Activated CD4-positive, alpha-beta memory T cell treated with anti-CD3 and anti-CD28 coated beads, Interleukin-2, amount 10 ng/mL, durations not matched to agents 7 days and 5 days (primary cell): ENCODE measurements at regions of chr6 and their contacts with region 1.

Region 1: DNA sequence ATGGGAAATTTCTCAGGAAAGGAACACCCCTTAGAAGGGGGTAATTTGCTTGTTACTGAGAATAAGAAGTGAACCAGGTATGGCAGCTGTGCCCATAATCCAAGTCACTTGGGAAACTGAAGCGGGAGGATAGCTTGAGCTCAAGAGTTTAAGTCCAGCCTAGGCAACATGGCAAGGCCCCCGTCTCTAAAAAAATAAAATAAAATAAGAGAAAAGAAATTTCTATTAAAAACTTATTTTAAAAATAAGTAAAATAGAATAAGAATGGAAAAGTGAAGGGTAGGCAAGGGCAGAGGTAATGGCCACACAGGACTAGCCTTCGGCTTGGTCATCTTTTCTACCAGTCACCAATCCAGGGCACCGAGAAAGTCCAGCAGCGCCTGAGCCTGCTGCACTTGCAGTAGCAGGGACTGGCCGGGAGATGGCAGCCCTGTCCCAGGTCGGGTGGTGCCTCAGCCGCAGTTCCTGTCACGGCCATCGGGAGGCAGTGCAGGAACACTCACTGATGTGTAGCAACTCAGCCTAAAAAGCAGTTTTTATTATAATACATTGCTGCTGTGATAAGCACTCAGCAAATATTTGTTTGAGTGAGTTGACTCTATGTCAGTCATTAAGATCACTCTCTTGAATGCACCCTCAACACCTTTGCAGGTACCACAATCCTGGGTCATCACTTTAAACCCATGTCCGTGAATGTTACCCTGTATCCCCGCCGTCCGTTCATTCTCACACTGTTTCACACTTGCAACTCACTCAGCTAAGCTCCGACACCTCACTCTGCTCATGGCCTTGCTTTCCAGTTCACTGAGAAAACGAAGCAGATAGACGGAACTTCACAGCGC is 23.2 kb upstream of the GCM1 start:
- DNase-seq: peak; percentile 91
- H3K4me3 Mint-ChIP-seq: no peak overlapping the region
- H3K27ac Mint-ChIP-seq: no peak overlapping the region
- H3K4me1 Mint-ChIP-seq: no peaks in the 10 kb centered on the region
- H3K27me3 Mint-ChIP-seq: no peaks in the 10 kb centered on the region

Region 2: GRCh38 chr6:53410508-53411258 is 238.9 kb after region 1 on chr6:
- CTCF ChIA-PET with region 1: interaction called, 56 read pairs
- POLR2A ChIA-PET with region 1: no interaction called
- DNase-seq: peak; percentile 65
- H3K4me3 Mint-ChIP-seq: no peak overlapping the region
- H3K27ac Mint-ChIP-seq: no peak overlapping the region
- H3K4me1 Mint-ChIP-seq: peaks cover 4% of the 10 kb centered on the region
- H3K27me3 Mint-ChIP-seq: peaks cover 2% of the 10 kb centered on the region

Region 3: DNA sequence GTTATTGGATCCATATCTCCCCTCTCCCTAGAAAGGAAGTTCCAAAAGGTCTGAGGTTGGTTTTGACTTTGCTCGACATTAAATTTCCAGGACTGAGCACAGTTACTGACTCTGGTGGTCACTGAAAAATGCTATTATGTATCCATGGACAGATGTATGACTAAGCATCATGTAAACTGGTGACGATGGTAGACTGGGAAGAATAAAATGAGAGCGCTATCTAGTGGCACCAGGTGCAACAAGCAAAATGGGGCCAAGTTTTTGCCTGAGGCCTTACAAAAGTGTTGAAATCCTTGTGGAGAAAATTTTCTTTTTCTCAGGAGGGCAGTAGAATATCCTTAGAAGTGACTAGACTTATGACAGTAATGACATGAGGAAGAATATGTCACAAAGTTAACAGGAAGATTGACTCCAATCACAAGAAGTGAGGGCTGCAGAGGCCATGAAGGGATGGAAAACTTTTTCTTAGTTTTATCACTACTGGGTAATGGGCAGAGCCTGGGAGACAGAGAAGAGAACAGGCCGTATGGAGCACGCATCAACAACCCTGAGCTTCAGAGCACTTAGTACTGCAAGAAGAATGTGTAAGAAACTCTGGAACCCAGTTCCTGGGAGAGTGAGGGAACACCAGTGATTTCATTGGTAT is 265.9 kb after region 1 on chr6:
- CTCF ChIA-PET with region 1: interaction called, 17 read pairs
- POLR2A ChIA-PET with region 1: no interaction called
- DNase-seq: peak; percentile 28
- H3K4me3 Mint-ChIP-seq: no peak overlapping the region
- H3K27ac Mint-ChIP-seq: no peak overlapping the region
- H3K4me1 Mint-ChIP-seq: peaks cover 20% of the 10 kb centered on the region
- H3K27me3 Mint-ChIP-seq: no peaks in the 10 kb centered on the region

Region 4: GRCh38 chr6:53484476-53485280 is 312.9 kb after region 1 on chr6:
- CTCF ChIA-PET with region 1: interaction called, 72 read pairs
- POLR2A ChIA-PET with region 1: no interaction called
- DNase-seq: peak; percentile 73
- H3K4me3 Mint-ChIP-seq: no peak overlapping the region
- H3K27ac Mint-ChIP-seq: no peak overlapping the region
- H3K4me1 Mint-ChIP-seq: peaks cover 34% of the 10 kb centered on the region
- H3K27me3 Mint-ChIP-seq: peaks cover 26% of the 10 kb centered on the region